Mucosa of descending colon (tissue), 3 donors: ENCODE measurements at regions of chr6 and their contacts with region 1.

Region 1: GRCh38 chr6:16332175-16332542 is 93.8 kb downstream of the GMPR start:
- DNase-seq: peak; percentile 68 to 84 (median 75)
- ATAC-seq: peak; percentile 91
- H3K4me3 ChIP-seq: no peak overlapping the region
- H3K4me1 ChIP-seq: peaks cover 6% of the 10 kb centered on the region
- CTCF ChIP-seq: peak; percentile 78

Region 2: GRCh38 chr6:14975471-14975817 is 1356.7 kb before region 1 on chr6:
- intact Hi-C with region 1: no loop called
- DNase-seq: no peak
- ATAC-seq: no peak
- H3K4me3 ChIP-seq: no peak overlapping the region
- H3K4me1 ChIP-seq: no peaks in the 10 kb centered on the region
- CTCF ChIP-seq: no peak

Region 3: DNA sequence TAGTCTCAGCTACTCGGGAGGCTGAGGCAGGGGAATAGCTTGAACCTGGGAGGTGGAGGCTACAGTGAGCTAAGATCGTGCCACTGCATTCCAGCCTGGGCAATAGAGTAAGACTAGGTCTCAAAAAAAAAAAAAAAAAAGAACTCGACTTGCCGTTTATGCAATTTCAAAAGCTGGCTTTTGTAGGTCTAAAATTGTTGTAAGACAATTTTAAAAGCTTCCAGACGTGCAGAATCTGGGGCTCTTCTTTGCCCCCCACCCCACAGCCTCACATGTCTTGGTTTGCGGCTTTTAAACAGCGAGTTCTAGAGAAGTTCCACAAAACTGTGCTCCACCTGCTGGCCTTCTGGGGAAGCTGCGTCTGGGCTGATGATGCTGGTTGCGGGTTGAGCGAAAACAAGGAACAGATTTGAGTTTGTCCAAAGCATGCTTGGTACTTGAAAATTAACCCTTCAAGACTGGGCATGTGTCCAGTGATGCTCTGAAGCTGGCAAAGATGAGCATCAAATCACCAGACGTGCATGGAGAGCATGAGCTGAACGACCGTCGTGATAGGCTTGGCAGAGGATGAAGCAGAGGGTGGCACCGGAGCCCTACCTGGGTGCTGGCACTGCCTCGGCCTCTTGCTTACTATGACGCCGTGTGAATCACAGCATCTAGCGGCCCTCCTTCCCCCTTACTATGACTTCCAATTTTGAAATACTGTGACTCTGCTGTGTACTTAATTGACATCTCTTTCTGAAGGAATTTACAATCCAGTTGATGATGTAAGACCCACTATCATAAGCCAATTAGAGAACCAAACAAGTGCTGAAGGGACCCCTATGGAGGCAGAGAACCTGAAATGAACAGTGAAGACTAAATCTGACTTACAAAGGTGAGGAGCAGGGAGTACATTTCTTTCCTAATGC is 77.6 kb after region 1 on chr6:
- intact Hi-C with region 1: loop called (anchors 5 to 10 kb)
- DNase-seq: peak; percentile 60 to 75 (median 69)
- ATAC-seq: peak; percentile 68
- H3K4me3 ChIP-seq: no peak overlapping the region
- H3K4me1 ChIP-seq: peaks cover 3% of the 10 kb centered on the region
- CTCF ChIP-seq: peak; percentile 61